Astrocyte of the cerebellum (primary cell): ENCODE measurements at regions of chr4 and their contacts with region 1.

Region 1: DNA sequence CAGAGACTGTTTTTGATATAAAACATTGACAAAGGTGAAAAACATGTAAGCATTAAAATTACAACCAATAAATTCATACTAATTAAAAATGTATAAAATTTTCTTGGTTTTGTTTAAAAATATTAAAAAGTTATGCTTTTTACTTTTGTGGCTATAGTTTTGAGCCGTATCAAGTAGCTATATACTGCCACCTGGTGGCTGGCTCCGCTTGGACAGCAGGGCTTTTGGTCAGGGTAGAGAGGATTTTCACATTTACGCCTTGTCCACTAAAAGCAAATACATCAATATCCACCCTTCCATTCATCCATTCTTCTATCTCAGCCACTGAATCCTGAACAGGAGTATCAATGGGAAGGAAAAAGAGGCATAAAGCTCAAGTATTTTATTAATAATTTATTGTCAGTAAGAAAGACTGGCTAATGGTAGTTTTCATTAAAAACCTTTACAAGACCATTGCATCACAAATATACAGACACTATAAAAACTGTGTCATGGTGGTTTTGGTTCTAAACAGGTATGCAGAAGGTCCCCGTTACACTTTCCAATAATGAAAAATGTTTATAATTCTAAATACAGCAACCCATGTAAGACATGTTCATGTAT is 32.1 kb upstream of the MTNR1A start:
- DNase-seq: peak; percentile 46
- H3K4me3 ChIP-seq: no peak overlapping the region
- CTCF ChIP-seq: peak; percentile 89

Region 2: GRCh38 chr4:186021461-186022167 is 565.9 kb before region 1 on chr4:
- in situ Hi-C with region 1: no loop called
- DNase-seq: peak; percentile 51
- H3K4me3 ChIP-seq: no peak overlapping the region
- CTCF ChIP-seq: peak; percentile 98

Region 3: DNA sequence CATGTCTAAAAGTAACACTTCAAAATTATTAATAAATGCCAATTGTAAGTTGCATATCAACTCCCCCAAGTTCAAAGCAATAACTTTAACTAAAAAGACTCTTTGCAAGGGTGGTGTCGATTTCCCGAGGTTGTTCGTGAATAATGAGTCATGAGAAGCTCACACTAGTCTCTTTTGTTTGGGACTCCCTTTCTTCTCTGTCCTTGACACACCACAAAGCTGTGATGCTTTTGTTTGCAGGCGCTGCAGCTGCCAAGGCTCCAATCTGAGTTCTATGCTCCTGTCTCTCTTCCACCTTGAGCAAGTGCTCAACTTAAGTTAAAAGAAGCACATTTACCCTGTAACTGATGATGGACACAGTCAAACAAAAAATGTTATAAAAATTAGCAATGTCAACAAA is 70.2 kb after region 1 on chr4:
- in situ Hi-C with region 1: loop called (anchors 5 kb)
- DNase-seq: peak; percentile 38
- H3K4me3 ChIP-seq: no peak overlapping the region
- CTCF ChIP-seq: no peak